GM13977 (cell line): ENCODE measurements at regions of chr17 and their contacts with region 1.

Region 1: DNA sequence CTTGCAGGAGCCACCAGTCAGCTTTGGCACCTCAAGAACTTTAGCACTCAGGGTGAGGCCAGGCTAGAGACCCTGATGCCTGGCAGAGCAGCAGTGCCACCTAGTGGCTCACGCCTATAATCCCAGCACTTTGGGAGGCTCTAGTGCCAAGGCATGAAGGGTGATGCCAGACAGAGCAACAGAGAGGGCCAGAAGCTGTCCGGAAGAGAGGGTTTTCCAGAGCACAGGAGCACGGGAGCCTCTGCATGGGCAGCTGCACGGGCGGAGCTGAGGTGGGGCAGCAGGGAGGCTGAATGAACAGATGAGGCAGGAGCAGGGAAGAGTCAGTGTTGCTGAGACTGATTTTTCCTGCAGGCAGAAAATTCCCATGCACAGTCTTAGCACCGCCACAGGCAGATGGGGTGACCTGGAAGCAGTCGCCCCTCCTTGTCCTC is 38.9 kb downstream of the MYH3 start:
- DNase-seq: peak; percentile 78
- CTCF ChIP-seq: peak; percentile 96

Region 2: GRCh38 chr17:9959377-9959981 is 658.7 kb before region 1 on chr17:
- in situ Hi-C with region 1: loop called (anchors 25 kb)
- DNase-seq: peak; percentile 83
- CTCF ChIP-seq: peak; percentile 76

Region 3: GRCh38 chr17:10327640-10328039 is 290.6 kb before region 1 on chr17:
- in situ Hi-C with region 1: loop called (anchors 25 kb)
- DNase-seq: peak; percentile 86
- CTCF ChIP-seq: peak; percentile 90

Region 4: GRCh38 chr17:10513299-10514067 is 104.7 kb before region 1 on chr17:
- in situ Hi-C with region 1: no loop called
- DNase-seq: no peak
- CTCF ChIP-seq: no peak

Region 5: GRCh38 chr17:10968007-10968406 is 349.8 kb after region 1 on chr17:
- in situ Hi-C with region 1: no loop called
- DNase-seq: no peak
- CTCF ChIP-seq: no peak